Activated CD4-positive, alpha-beta T cell treated with anti-CD3 and anti-CD28 coated beads for 36 hours (primary cell): ENCODE measurements at regions of chr7 and their contacts with region 1.

Region 1: DNA sequence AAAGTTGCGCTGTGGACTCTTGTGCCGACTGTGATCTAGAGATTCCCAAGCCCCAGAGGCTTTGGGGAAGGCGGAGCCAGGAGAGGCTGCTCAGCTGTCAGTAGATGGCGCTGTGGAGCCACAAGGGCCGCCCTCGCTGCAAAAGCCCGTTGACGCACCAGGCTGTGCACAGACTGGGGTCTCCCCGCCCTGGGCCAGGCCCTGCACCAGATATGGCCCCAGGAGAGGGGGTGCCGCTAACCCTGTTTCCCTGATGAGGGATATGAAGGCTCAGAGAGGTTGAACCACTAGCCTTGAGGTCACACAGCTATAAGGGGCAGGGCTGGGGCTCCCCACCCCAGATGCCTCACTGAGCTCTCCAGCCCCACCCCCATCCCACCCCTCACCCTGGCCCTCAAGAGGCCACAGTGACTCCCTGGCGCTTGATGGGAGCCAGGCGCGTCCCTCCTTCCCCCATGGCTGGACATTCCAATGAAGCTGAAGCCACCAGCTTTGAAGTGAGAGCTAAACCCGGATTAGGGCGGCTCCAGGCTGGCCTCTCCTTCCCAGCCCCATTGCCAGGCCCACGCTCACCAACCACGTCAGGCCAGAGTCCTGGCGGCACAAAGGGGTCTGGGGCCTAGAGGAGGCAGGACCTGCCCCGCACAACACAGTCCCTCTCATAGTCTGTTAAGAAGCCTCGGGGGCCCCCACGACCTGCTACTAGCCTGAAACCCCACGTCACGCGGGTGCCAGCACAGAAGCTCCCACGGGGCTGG is 26.4 kb downstream of the MYL10 start:
- DNase-seq: peak; percentile 87
- ATAC-seq: peak; percentile 96
- H3K4me3 Mint-ChIP-seq: no peak overlapping the region
- H3K27ac Mint-ChIP-seq: no peak overlapping the region
- H3K4me1 Mint-ChIP-seq: no peaks in the 10 kb centered on the region
- H3K27me3 Mint-ChIP-seq: no peaks in the 10 kb centered on the region

Region 2: DNA sequence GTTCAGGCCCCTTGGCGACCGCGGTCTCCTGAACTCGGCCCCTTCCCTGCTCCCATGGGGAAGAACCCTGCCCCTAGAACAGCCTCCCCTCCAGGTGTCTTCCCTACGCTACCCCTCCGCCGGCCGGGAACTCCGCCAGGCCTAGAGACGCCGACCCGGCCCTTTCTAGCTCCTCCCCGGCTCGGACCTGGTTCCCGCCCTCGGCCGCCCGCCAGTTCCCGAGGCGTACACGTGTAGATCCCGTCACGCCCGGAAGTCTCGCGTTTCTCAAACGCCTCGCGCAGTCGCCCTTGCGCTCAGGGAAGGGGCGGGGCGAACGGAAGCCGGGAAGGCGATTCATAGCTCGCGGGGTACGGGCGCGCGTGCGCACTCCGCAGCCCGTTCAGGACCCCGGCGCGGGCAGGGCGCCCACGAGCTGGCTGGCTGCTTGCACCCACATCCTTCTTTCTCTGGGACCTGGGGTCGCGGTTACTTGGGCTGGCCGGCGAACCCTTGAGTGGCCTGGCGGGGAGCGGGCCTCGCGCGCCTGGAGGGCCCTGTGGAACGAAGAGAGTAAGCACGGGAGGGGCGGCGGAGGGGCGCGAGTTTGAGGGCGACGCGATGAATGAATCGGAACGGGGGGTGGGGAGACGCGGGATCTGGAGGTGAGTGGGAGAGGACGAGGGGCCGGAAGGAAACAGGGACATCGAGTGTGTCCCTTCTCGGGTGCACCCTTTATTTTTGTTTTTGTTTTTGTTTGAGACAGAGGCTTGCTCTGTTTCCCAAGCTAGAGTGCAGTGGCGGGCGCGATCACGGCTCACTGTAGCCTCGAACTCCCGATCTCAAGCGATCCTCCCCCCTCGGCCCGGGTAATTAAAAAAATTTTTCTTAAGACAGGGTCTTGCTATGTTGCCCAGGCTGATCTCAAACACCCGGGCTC is 896.7 kb before region 1 on chr7 and contains the start of gene POP7:
- CTCF ChIA-PET with region 1: no interaction called
- POLR2A ChIA-PET with region 1: no interaction called
- intact Hi-C with region 1: no loop called
- DNase-seq: peak; percentile 99
- ATAC-seq: peak; percentile 96
- H3K4me3 Mint-ChIP-seq: peak within 1 kb of the TSS; percentile 96
- H3K27ac Mint-ChIP-seq: peak within 1 kb of the TSS; percentile 96
- H3K4me1 Mint-ChIP-seq: peaks cover 12% of the 10 kb centered on the region
- H3K27me3 Mint-ChIP-seq: no peaks in the 10 kb centered on the region
- total RNA-seq, gene POP7: 46.1 to 59.4 TPM

Region 3: DNA sequence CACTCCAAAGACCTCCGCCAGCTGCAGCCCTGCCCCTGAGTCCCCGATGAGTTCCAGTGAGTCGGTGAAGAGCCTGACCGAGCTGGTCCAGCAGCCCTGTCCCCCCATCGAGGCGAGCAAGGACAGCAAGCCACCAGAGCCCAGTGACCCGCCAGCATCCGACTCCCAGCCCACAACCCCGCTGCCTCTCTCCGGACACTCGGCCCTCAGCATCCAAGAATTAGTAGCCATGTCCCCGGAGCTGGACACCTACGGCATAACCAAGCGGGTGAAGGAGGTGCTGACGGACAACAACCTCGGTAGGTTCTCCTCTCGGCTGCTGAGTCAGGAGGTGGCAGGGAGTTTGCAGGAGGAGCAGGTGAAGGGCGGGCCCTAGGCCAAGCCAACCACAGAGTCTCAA is 624.7 kb after region 1 on chr7:
- CTCF ChIA-PET with region 1: no interaction called
- POLR2A ChIA-PET with region 1: no interaction called
- intact Hi-C with region 1: loop called in 1 of 2 experiments (anchors 1 kb)
- DNase-seq: no peak
- ATAC-seq: no peak
- H3K4me3 Mint-ChIP-seq: no peak overlapping the region
- H3K27ac Mint-ChIP-seq: no peak overlapping the region
- H3K4me1 Mint-ChIP-seq: no peaks in the 10 kb centered on the region
- H3K27me3 Mint-ChIP-seq: no peaks in the 10 kb centered on the region

Region 4: DNA sequence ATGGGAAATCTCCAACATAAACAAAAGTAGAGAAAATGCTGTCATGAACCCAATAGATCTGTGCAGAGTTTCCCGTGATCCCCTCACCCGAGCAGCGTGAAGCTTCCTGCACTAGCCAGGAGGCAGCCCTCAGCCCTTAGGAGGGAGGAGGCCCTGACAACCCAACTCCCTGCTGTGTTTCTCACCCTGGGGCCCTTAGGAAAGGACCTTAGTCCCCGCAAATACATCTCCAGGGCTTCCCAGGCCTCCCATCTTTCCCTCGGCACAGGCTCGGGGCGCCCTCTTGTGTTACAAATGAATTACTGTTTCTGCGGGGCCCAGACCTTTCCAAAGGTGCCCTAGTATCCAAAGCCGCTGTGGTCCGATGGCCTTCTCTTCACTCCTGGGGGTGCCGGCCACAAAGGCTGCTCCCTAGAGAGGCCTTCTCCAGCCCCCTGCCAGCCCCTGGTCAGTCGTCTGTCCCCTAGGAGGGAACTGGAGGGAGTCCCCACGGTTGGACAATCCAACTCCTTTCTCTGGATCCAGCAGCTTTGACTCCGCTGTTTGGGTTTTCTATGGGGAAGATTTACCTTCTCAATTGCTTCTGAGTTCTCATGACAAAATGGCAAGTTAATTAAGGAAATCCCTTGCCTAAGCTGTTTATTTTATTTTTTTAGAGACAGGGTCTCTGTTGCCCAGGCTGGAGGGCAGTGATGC is 634.1 kb after region 1 on chr7:
- CTCF ChIA-PET with region 1: interaction called, 3 read pairs
- POLR2A ChIA-PET with region 1: no interaction called
- intact Hi-C with region 1: loop called (anchors 1 to 5 kb)
- DNase-seq: peak; percentile 73
- ATAC-seq: peak; percentile 77
- H3K4me3 Mint-ChIP-seq: no peak overlapping the region
- H3K27ac Mint-ChIP-seq: no peak overlapping the region
- H3K4me1 Mint-ChIP-seq: no peaks in the 10 kb centered on the region
- H3K27me3 Mint-ChIP-seq: no peaks in the 10 kb centered on the region

Region 5: GRCh38 chr7:102272075-102272917 is 669.6 kb after region 1 on chr7:
- CTCF ChIA-PET with region 1: interaction called, 3 read pairs
- POLR2A ChIA-PET with region 1: no interaction called
- intact Hi-C with region 1: loop called (anchors 1 kb)
- DNase-seq: peak; percentile 88
- ATAC-seq: peak; percentile 90
- H3K4me3 Mint-ChIP-seq: no peak overlapping the region
- H3K27ac Mint-ChIP-seq: no peak overlapping the region
- H3K4me1 Mint-ChIP-seq: peaks cover 2% of the 10 kb centered on the region
- H3K27me3 Mint-ChIP-seq: no peaks in the 10 kb centered on the region